ENCODE measurements at regions of chr19 and their contacts with region 1.

Region 1: GRCh38 chr19:40139533-40140287 is 49.0 kb upstream of the ZNF780A start:
- DNase-seq: peak in 3 of 7 donors; percentile 25 to 59 (median 48)
- H3K4me3 ChIP-seq: no peak overlapping the region
- H3K27ac ChIP-seq: no peak overlapping the region
- H3K4me1 ChIP-seq: no peaks in the 10 kb centered on the region
- H3K27me3 ChIP-seq: no peaks in the 10 kb centered on the region
- CTCF ChIP-seq: peak; percentile 38 to 93 (median 82)
- POLR2A ChIP-seq: no peak

Region 2: DNA sequence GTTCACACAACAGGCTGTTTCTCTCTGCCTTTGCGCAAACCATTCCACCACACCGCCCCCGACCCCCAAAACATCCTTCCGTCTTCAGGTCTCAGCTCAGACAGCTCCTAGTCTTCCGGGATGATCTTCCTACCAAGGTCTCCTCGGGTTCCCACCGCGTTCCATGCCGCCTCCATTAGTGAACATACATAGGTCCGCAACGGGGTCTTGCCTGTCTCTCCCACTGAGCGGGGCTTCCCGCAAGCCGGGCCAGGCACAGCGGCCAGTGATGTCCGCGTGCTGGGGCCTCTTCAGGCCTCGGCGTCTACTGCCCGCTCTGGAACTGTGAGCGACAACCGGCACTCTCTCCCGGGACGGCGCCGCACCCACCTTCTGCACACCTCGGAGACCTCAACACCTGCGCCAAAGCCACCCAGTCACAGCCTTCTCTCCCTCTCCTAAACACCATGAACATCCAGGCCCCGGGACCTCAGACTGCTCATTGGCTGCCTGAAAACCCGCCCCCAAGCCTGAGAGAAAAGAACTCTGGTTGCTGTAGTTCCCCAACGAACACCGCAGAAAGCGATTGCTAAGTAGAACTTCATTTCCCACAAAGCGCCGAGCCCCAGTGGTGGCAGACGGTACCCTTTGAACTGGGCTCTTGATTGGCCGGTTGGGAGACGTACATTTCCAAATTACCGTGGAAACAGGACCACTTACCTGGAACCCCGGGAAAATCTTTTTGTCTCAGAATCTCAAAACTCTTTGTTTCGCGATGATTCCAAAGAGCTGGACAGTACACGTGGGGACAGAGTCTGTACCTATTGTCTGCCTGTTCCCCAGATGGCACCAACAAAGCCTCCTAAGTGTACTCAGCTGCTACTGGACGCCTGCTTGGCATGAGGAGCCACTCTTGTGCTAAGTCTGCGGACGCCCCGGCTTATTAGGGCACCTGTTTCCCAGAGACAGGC is 315.3 kb before region 1 on chr19:
- intact Hi-C with region 1: no loop called
- DNase-seq: peak; percentile 88 to 97 (median 94)
- H3K4me3 ChIP-seq: peak overlapping the region; percentile 47 to 80 (median 64)
- H3K27ac ChIP-seq: peak overlapping the region in 4 of 5 donors; percentile 25 to 69 (median 56)
- H3K4me1 ChIP-seq: peaks cover 3 to 6% of the 10 kb centered on the region in 2 donors
- H3K27me3 ChIP-seq: no peaks in the 10 kb centered on the region
- CTCF ChIP-seq: peak in 2 of 6 experiments; percentile 13 to 29
- POLR2A ChIP-seq: peak; percentile 48 to 81

Region 3: GRCh38 chr19:40056505-40056904 is 83.2 kb before region 1 on chr19:
- intact Hi-C with region 1: no loop called
- DNase-seq: no peak
- H3K4me3 ChIP-seq: peak overlapping the region; percentile 67 to 89 (median 87)
- H3K27ac ChIP-seq: peak overlapping the region in 4 of 5 donors; percentile 26 to 77 (median 60)
- H3K4me1 ChIP-seq: peaks cover 4 to 13% of the 10 kb centered on the region in 2 donors
- H3K27me3 ChIP-seq: no peaks in the 10 kb centered on the region
- CTCF ChIP-seq: no peak
- POLR2A ChIP-seq: no peak

Region 4: GRCh38 chr19:40221858-40222837 is 82.4 kb after region 1 on chr19:
- intact Hi-C with region 1: loop called (anchors 5 to 10 kb)
- DNase-seq: peak; percentile 79 to 96 (median 90)
- H3K4me3 ChIP-seq: no peak overlapping the region
- H3K27ac ChIP-seq: no peak overlapping the region
- H3K4me1 ChIP-seq: peaks cover 9 to 17% of the 10 kb centered on the region in 2 donors
- H3K27me3 ChIP-seq: peaks cover 19% of the 10 kb centered on the region
- CTCF ChIP-seq: peak; percentile 92 to 98 (median 94)
- POLR2A ChIP-seq: no peak